ENCODE measurements at regions of chr17 and their contacts with region 1.

Region 1: DNA sequence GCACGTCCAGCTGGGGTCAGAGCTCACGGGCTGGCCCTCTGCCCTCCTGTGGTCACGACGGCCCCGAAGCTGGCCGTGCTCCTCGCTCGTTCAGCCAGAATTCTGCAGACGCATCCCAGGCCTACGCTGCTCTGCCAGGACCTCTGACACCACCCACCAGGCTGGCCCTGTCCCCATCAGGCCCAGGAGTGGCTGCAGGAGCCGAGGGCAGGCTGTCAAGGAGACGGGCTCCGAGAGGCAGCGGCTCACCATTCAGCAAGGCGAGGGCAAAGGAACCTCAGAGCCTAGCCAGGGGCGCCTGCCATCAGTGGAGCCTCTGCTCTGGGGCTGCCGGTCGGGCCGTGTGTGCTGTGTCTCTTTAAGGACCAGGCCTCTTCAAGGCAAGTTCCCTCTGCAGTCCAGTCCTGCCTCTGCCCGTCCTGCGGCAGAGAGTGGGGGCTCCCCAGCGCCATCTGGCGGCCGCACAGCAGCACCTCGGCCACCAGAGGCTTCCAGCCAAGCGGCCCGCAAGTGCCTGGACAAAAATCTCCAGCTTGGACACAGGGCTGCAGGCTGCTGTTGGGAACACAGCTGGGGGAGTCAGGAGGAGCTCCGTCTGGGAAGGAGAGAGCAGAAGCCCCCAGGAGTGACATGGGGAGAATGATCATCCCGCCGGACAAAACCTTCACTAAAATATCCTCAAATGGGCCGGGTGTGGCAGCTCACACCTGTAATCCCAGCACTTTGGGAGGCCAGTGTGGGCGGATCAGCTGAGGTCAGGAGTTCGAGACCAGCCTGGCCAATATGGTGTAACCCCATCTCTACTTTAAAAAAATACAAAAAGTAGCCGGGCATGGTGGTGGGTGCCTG is 7.4 kb upstream of the ABR start:
- DNase-seq: peak; percentile 77
- H3K4me3 Mint-ChIP-seq: no peak overlapping the region
- H3K27ac Mint-ChIP-seq: no peak overlapping the region
- H3K4me1 Mint-ChIP-seq: peaks cover 6% of the 10 kb centered on the region
- H3K27me3 Mint-ChIP-seq: no peaks in the 10 kb centered on the region

Region 2: GRCh38 chr17:1055751-1056645 is 131.1 kb before region 1 on chr17:
- CTCF ChIA-PET with region 1: interaction called, 14 read pairs
- intact Hi-C with region 1: loop called (anchors 1 kb)
- DNase-seq: peak; percentile 64
- H3K4me3 Mint-ChIP-seq: no peak overlapping the region
- H3K27ac Mint-ChIP-seq: no peak overlapping the region
- H3K4me1 Mint-ChIP-seq: no peaks in the 10 kb centered on the region
- H3K27me3 Mint-ChIP-seq: no peaks in the 10 kb centered on the region

Region 3: GRCh38 chr17:1197781-1198490 is 10.8 kb after region 1 on chr17:
- CTCF ChIA-PET with region 1: interaction called, 19 read pairs
- intact Hi-C with region 1: no loop called
- DNase-seq: peak; percentile 54
- H3K4me3 Mint-ChIP-seq: no peak overlapping the region
- H3K27ac Mint-ChIP-seq: no peak overlapping the region
- H3K4me1 Mint-ChIP-seq: peaks cover 31% of the 10 kb centered on the region
- H3K27me3 Mint-ChIP-seq: no peaks in the 10 kb centered on the region

Measured in activated naive CD4-positive, alpha-beta T cell treated with anti-CD3 and anti-CD28 coated beads for 36 hours (primary cell).